ENCODE measurements at regions of chr9 and their contacts with region 1.

Region 1: GRCh38 chr9:34646211-34647083 is at the start of gene GALT:
- DNase-seq: peak; percentile 45
- H3K4me3 ChIP-seq: peak within 1 kb of the TSS; percentile 93
- H3K27ac ChIP-seq: peak within 1 kb of the TSS; percentile 75
- H3K27me3 ChIP-seq: no peaks in the 10 kb centered on the region
- CTCF ChIP-seq: peak; percentile 68
- polyA plus RNA-seq, gene GALT: 24.8 and 28.4 TPM in 2 replicates

Region 2: GRCh38 chr9:34665381-34666250 is 19.2 kb after region 1 on chr9:
- CTCF ChIA-PET with region 1: interaction called, 11 read pairs
- POLR2A ChIA-PET with region 1: interaction called, 9 read pairs
- DNase-seq: peak; percentile 85
- H3K4me3 ChIP-seq: peak overlapping the region; percentile 95
- H3K27ac ChIP-seq: peak overlapping the region; percentile 96
- H3K27me3 ChIP-seq: no peaks in the 10 kb centered on the region
- CTCF ChIP-seq: no peak